Activated naive CD4-positive, alpha-beta T cell treated with anti-CD3 and anti-CD28 coated beads for 36 hours (primary cell): ENCODE measurements at regions of chr1 and their contacts with region 1.

Region 1: GRCh38 chr1:150629115-150629928 is at the start of gene ENSA:
- DNase-seq: peak; percentile 98
- H3K4me3 Mint-ChIP-seq: no peak within 1 kb of the TSS
- H3K27ac Mint-ChIP-seq: peak within 1 kb of the TSS; percentile 54
- H3K4me1 Mint-ChIP-seq: peaks cover 42% of the 10 kb centered on the region
- H3K27me3 Mint-ChIP-seq: no peaks in the 10 kb centered on the region
- total RNA-seq, gene ENSA: 187 to 193 TPM

Region 2: DNA sequence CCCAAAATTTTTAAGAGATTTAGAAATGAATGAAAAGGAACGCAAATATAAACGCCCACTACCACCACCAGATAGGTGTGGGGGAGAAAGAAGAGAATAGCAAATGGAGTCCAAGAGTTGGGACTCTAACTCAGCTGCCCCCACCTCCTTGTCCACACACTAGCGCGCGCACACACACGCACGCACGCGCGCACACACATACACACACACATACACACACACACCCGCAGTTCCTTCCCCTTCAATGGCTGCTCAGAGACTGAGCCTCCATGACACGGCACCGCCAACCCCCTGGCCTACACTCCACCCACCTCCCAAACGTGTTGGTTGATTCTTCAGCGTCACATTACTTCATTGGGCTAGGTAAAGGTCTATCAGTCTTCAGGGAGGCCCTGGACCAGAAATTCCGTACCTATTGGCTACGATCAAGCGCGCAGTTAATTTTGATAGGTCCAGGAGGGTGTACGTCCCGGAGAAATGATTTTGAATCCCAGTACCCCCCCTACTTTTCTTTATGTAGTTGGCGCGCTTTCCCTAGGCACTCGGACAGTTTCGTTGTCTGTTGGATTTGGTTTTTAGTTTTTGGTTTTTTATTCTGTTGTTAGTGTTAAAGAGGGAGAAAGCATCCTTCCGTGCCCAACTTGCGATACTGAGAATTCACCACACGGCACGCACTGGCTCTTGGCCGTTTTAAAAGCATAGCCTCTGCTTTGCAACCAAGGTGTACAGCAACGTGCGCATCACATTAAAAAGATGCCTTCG is 393.3 kb before region 1 on chr1 and contains the start of gene ANP32E:
- CTCF ChIA-PET with region 1: no interaction called
- intact Hi-C with region 1: loop called (anchors 1 kb)
- DNase-seq: peak; percentile 97
- H3K4me3 Mint-ChIP-seq: no peak within 1 kb of the TSS
- H3K27ac Mint-ChIP-seq: no peak within 1 kb of the TSS
- H3K4me1 Mint-ChIP-seq: peaks cover 21% of the 10 kb centered on the region
- H3K27me3 Mint-ChIP-seq: no peaks in the 10 kb centered on the region
- total RNA-seq, gene ANP32E: 201 to 202 TPM

Region 3: DNA sequence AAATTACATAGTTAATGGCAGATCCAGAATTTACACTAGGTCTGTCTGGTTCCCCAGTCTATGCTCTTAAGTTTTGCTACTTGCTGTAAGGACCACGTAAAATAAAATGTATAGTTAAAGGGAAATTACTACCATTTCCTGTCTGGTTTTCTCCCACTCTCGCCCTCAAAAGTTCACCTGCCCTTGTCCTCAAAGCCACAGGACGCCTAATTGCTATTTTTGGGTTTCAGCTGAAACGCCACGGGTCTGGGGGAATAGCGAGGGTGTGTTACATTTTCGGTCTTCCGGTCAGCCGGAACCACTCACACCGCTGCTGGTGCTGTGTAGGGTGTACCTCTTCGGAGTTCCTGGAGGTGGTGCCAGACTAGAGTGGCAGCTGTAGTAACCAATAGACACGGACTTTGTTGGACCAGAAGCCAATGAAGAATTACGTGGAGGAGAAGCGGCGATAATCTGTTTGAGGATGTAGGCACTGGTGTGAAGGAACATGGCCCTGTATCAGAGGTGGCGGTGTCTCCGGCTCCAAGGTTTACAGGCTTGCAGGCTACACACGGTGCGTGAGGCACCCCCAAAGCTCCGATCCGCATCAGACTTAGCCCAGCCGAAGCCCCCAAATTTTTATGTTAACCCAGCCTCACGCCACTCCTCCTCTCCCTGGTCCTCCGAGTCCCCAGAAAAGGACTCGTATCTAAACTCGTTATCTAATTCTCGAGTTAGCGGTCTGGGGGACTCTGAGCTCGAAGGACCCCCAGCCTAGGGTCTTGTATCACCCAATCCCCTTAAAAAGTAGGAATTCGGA is 142.2 kb before region 1 on chr1 and contains the start of gene TARS2:
- CTCF ChIA-PET with region 1: no interaction called
- intact Hi-C with region 1: loop called (anchors 10 kb)
- DNase-seq: peak; percentile 99
- H3K4me3 Mint-ChIP-seq: peak within 1 kb of the TSS; percentile 98
- H3K27ac Mint-ChIP-seq: peak within 1 kb of the TSS; percentile 96
- H3K4me1 Mint-ChIP-seq: peaks cover 10% of the 10 kb centered on the region
- H3K27me3 Mint-ChIP-seq: no peaks in the 10 kb centered on the region
- total RNA-seq, gene TARS2: 43.7 to 46.0 TPM

Region 4: GRCh38 chr1:150613061-150613920 is 16.0 kb before region 1 on chr1:
- CTCF ChIA-PET with region 1: interaction called, 5 read pairs
- intact Hi-C with region 1: loop called (anchors 1 kb)
- DNase-seq: peak; percentile 81
- H3K4me3 Mint-ChIP-seq: peak overlapping the region; percentile 41
- H3K27ac Mint-ChIP-seq: peak overlapping the region; percentile 93
- H3K4me1 Mint-ChIP-seq: peaks cover 64% of the 10 kb centered on the region
- H3K27me3 Mint-ChIP-seq: no peaks in the 10 kb centered on the region

Region 5: GRCh38 chr1:150876119-150876454 is 246.8 kb after region 1 on chr1:
- CTCF ChIA-PET with region 1: no interaction called
- intact Hi-C with region 1: loop called (anchors 1 kb)
- DNase-seq: peak; percentile 58
- H3K4me3 Mint-ChIP-seq: peak overlapping the region; percentile 83
- H3K27ac Mint-ChIP-seq: peak overlapping the region; percentile 83
- H3K4me1 Mint-ChIP-seq: peaks cover 18% of the 10 kb centered on the region
- H3K27me3 Mint-ChIP-seq: no peaks in the 10 kb centered on the region

Region 6: DNA sequence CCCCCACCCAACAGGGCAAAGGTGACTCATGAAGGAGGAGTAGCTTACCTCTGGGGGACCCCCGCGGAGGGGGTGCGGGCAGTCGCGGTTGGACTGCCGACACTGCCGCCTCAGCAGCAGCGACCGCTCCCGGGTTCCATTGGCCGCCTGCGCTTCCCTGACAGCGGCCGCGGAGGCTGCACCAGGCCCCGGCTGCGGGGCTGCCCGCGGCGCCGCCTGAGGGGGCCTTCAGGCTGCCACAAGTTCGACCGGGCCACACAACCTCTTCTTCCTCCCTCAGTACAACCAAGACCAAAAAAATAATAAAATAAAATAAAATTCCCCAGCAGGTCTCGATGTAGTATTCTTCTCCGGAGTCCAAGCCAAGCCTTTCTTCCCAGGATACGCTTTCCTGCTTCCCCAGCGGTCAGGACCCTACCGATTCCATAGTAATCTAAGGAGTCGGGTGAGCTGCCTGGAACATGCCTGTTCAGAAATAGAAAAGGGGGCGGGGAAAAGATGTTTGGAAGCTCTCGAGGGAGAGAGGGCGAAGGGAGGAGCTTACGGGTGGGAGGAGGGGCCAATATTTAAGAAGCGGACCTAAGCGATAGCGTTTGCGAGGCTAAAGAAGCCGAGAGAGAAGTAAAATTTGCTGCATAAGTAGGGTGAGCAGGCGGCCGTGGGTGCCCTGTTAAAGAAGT is 698.0 kb after region 1 on chr1 and contains the start of gene PI4KB:
- CTCF ChIA-PET with region 1: no interaction called
- intact Hi-C with region 1: loop called (anchors 1 kb)
- DNase-seq: peak; percentile 96
- H3K4me3 Mint-ChIP-seq: peak within 1 kb of the TSS; percentile 93
- H3K27ac Mint-ChIP-seq: peak within 1 kb of the TSS; percentile 96
- H3K4me1 Mint-ChIP-seq: peaks cover 35% of the 10 kb centered on the region
- H3K27me3 Mint-ChIP-seq: no peaks in the 10 kb centered on the region
- total RNA-seq, gene PI4KB: 64.1 to 69.2 TPM